ENCODE measurements at regions of chr9 and their contacts with region 1.

Region 1: GRCh38 chr9:87324613-87325194 is 173.0 kb upstream of the DAPK1 start:
- DNase-seq: peak in 4 of 42 donors; percentile 9 to 66 (median 20)

Region 2: GRCh38 chr9:86486891-86487837 is 837.5 kb before region 1 on chr9:
- intact Hi-C with region 1: loop called (anchors 5 kb)
- DNase-seq: peak in 16 of 42 donors; percentile 1 to 71 (median 32)

Region 3: GRCh38 chr9:86637515-86637914 is 687.2 kb before region 1 on chr9:
- intact Hi-C with region 1: loop called (anchors 10 kb)
- DNase-seq: peak in 33 of 42 donors; percentile 5 to 75 (median 32)

Region 4: DNA sequence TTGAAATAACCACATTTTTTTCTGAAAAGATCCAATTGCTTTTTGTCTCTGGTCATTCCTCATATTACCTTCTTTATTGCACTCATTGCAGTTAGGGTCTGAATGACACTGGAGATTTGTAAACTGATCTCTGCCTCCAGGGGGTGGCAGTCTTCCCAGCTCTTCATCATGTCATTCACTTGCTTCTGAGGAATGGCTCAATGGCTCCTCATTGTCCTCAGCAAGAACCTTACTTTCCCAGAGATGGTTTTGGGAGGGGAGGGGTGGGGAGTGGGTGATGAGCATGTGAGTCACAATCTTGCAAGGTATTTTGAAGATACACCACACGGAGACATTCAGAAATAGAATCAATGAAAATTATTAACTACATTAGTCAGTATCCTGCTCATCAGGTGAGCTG is 217.6 kb before region 1 on chr9:
- intact Hi-C with region 1: loop called (anchors 10 kb)
- DNase-seq: peak in 23 of 42 donors; percentile 7 to 79 (median 47)

Region 5: GRCh38 chr9:87223392-87224246 is 101.1 kb before region 1 on chr9:
- intact Hi-C with region 1: no loop called
- DNase-seq: no peak